Pancreas (tissue), 10 donors: ENCODE measurements at regions of chr7 and their contacts with region 1.

Region 1: GRCh38 chr7:82572195-82572880 is 128.8 kb upstream of the CACNA2D1 start:
- DNase-seq: peak; percentile 70 to 86 (median 80)
- ATAC-seq: peak; percentile 82 to 94 (median 92)
- H3K4me3 ChIP-seq: no peak overlapping the region
- H3K27ac ChIP-seq: no peak overlapping the region
- H3K4me1 ChIP-seq: no peaks in the 10 kb centered on the region
- H3K27me3 ChIP-seq: no peaks in the 10 kb centered on the region
- CTCF ChIP-seq: peak; percentile 69 to 89 (median 82)

Region 2: GRCh38 chr7:82044497-82045080 is 527.7 kb before region 1 on chr7:
- intact Hi-C with region 1: loop called in 1 of 3 experiments (anchors 10 kb)
- DNase-seq: peak in 1 of 6 donors; percentile 32
- ATAC-seq: peak in 3 of 4 donors; percentile 59 to 69 (median 67)
- H3K4me3 ChIP-seq: no peak overlapping the region
- H3K27ac ChIP-seq: no peak overlapping the region
- H3K4me1 ChIP-seq: no peaks in the 10 kb centered on the region
- H3K27me3 ChIP-seq: peaks cover 0 to 12% (median 1%) of the 10 kb centered on the region in 4 donors
- CTCF ChIP-seq: peak; percentile 13 to 64 (median 54)

Region 3: DNA sequence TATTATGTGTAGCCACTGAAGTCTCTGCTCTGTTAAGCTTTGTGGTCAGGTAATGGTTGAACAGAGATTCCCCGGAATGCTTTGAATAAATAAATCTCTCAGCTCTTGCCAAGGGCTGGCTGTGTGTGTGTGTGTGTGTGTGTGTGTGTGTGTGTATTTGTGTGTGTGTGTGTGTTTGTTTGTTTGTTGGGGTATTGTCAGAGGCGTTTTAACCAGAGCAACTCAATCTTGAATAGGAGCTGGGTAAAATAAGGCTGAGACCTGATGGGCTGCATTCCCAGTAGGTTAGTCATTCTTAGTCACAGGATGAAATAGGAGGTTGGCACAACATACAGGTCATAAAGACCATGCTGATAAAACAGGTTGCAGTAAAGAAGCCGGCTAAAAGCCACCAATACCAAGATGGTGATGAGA is 127.4 kb after region 1 on chr7:
- intact Hi-C with region 1: no loop called
- DNase-seq: peak in 1 of 6 donors; percentile 20
- ATAC-seq: peak in 1 of 4 donors; percentile 46
- H3K4me3 ChIP-seq: no peak overlapping the region
- H3K27ac ChIP-seq: no peak overlapping the region
- H3K4me1 ChIP-seq: peaks cover 0 to 7% (median 0%) of the 10 kb centered on the region in 3 donors
- H3K27me3 ChIP-seq: no peaks in the 10 kb centered on the region
- CTCF ChIP-seq: no peak